ENCODE measurements at regions of chr7 and their contacts with region 1.

Region 1: DNA sequence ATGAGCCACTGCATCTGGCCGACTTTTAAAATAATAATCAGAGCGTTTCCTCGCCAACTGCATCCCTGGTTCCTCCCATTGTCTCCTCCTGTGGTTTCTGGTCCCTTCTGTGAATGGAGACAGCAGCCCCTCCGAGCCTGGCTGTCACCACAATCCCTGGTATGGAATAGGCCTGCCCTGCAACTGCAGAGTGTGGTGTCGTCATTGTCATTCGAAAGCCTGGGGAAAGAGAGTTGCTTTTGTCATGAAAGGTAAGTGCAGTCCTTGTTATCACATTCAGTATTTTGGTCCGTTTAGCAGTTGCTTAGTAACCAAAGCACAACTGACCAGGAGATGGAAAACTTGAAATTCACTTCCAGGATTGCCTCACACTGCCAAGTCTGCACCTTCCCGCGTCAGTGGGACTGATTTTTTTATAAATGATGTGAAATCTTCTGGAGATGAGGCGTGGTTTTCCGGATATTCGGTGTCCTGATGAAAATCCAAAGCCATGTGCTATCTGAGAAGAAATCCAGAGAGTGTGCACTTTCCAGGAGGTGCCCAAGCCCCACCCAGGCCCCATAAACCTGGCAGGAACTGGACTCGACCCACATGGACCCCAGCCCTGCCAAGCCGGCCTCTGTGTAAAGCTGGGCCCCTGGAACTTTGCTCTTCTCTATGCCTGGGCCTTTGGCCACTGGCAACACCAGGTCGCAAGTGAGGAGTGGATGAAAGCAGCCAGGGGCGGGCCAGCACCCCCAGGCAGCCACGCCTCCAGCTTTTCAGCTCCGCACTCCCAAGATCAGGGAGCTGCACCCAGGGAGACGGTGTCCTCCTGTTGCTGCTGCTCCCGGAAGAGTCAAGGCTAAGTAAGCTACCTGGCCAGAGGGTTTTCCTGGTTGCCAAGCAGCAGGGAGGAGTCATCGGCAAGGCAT is 133.7 kb upstream of the SH2B2 start:
- DNase-seq: peak; percentile 34
- ATAC-seq: peak; percentile 91
- H3K4me3 ChIP-seq: no peak overlapping the region
- H3K27ac ChIP-seq: peak overlapping the region; percentile 46
- H3K4me1 ChIP-seq: peaks cover 13% of the 10 kb centered on the region
- H3K27me3 ChIP-seq: no peaks in the 10 kb centered on the region
- CTCF ChIP-seq: no peak

Region 2: GRCh38 chr7:101838837-101839483 is 314.0 kb before region 1 on chr7:
- CTCF ChIA-PET with region 1: no interaction called
- POLR2A ChIA-PET with region 1: no interaction called
- intact Hi-C with region 1: no loop called
- DNase-seq: no peak
- ATAC-seq: no peak
- H3K4me3 ChIP-seq: no peak overlapping the region
- H3K27ac ChIP-seq: no peak overlapping the region
- H3K4me1 ChIP-seq: no peaks in the 10 kb centered on the region
- H3K27me3 ChIP-seq: no peaks in the 10 kb centered on the region
- CTCF ChIP-seq: no peak

Region 3: DNA sequence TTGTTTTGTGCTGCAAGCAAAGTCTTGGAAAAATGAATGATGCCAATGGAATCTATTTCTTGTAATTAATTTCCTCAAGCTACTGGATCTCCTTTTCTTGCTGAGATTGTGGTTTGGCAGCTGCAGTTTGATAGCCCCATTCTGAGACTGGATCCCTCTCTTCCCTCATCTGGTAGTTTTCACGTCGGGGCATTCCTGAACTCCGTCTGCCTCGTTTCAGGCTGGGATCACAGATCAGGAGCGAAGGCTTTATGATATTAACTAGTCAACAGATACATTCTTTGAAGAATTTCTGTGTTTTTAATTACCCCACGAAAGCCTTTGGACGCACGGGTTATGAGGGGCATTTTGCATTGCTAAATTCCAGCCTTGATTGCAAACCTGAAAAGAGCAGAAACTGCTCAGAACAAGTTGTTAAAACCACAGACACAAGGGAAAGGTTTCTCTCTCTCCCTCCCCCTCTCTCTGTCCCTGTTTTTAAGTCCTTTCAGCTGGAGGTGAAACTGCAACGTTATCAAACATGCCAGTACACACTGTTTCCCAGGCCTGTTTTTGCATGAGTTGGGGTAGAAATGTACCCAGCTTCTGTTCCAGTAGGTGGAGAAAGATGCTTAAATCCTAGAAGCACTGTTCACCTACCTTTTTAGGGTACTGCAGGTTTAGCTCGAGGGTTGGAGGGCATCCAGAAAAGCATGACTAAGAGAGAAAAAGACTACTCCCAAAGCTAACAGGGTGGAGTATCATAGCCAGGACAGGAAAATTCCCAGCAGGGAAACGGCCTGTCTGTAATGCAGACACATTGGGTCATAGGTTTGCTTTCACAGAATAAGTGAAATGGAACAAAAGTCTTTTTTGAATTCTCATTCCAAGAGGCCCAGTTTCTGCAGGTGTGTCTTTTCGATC is 211.2 kb before region 1 on chr7:
- CTCF ChIA-PET with region 1: no interaction called
- POLR2A ChIA-PET with region 1: interaction called, 24 read pairs
- intact Hi-C with region 1: no loop called
- DNase-seq: peak; percentile 96
- ATAC-seq: peak; percentile 93
- H3K4me3 ChIP-seq: peak overlapping the region; percentile 48; the same call in 1 of the 2 replicates
- H3K27ac ChIP-seq: peak overlapping the region; percentile 98
- H3K4me1 ChIP-seq: peaks cover 37% of the 10 kb centered on the region
- H3K27me3 ChIP-seq: no peaks in the 10 kb centered on the region
- CTCF ChIP-seq: peak; percentile 41

Region 4: GRCh38 chr7:102195361-102196036 is 42.6 kb after region 1 on chr7:
- CTCF ChIA-PET with region 1: no interaction called
- POLR2A ChIA-PET with region 1: no interaction called
- intact Hi-C with region 1: no loop called
- DNase-seq: no peak
- ATAC-seq: no peak
- H3K4me3 ChIP-seq: no peak overlapping the region
- H3K27ac ChIP-seq: no peak overlapping the region
- H3K4me1 ChIP-seq: no peaks in the 10 kb centered on the region
- H3K27me3 ChIP-seq: no peaks in the 10 kb centered on the region
- CTCF ChIP-seq: no peak

Measured in PC-3 (cell line).